ENCODE measurements at regions of chr3 and their contacts with region 1.

Region 1: DNA sequence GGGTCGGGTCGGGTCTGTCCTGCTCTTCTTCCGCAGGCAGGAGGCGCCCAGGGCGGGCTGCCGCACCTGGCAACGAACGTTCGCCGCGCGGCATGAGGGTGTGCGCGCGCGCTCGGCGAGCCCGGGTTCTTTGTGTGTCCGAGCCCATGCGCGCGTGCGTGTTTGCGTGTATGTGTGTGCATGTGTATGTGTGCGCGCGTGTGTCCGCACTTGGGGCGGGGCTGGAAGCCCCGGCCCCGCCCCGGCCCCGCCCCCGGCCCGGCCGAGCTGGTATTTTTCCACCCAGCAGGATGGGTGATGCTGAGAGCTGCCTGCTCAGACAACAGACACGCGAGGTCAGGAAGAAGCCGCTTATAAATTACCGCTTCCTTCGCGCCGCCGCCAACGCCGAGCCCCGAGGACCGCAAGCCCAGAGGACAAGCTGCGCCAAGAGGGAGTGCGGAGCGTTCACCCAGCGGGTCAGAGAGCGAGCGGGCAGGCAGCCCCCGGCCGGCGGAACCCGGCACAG is at the start of gene SLC6A6:
- DNase-seq: peak; percentile 84
- H3K4me3 ChIP-seq: peak within 1 kb of the TSS; percentile 75
- H3K27ac ChIP-seq: no peak within 1 kb of the TSS
- H3K27me3 ChIP-seq: peaks cover 2% of the 10 kb centered on the region
- CTCF ChIP-seq: peak; percentile 47
- polyA plus RNA-seq, gene SLC6A6: 30.8 and 33.5 TPM in 2 replicates

Region 2: GRCh38 chr3:14261229-14261628 is 141.1 kb before region 1 on chr3:
- CTCF ChIA-PET with region 1: interaction called, 10 read pairs
- POLR2A ChIA-PET with region 1: no interaction called
- DNase-seq: peak; percentile 48
- H3K4me3 ChIP-seq: no peak overlapping the region
- H3K27ac ChIP-seq: no peak overlapping the region
- H3K27me3 ChIP-seq: no peaks in the 10 kb centered on the region
- CTCF ChIP-seq: peak; percentile 99

Region 3: DNA sequence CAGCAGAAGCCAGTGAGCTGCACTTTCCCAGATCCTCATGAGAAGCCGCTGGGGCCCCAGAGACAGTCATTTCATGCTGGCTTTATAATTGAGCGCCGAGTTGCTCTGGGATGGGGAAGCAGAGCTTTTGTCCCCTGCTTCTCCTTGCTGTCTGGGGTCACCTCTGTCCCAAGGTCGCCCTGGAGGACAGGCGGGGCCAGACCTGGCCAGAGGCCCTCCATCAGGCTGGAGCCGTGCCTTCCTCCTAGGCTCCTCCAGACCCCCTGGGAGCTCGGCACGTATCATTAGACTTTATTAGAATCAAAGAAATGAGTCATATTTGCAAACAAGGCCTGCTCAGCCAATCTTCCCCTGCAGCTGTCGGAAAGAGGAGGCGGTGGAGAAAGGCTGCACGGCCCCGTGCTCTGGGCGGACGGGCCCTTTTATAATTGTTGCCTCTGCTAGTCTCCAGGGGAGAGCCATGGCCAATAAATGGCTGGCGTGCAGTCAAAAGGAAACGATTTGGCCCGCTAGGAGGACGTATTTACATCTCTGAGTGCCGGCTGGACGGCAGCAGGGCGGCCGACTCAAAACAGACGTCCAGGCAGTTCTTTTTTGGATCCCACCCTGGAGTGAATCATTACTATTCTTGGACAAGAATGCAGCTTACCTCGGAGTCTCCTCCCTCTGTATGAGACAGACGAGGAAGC is 50.5 kb after region 1 on chr3:
- CTCF ChIA-PET with region 1: no interaction called
- POLR2A ChIA-PET with region 1: interaction called, 14 read pairs
- DNase-seq: peak; percentile 96
- H3K4me3 ChIP-seq: peak overlapping the region; percentile 32
- H3K27ac ChIP-seq: peak overlapping the region; percentile 100
- H3K27me3 ChIP-seq: no peaks in the 10 kb centered on the region
- CTCF ChIP-seq: peak; percentile 30

Measured in AG04450 (cell line).